Uterus (tissue), 4 donors: ENCODE measurements at regions of chr15 and their contacts with region 1.

Region 1: GRCh38 chr15:67303490-67304363 is 49.1 kb downstream of the IQCH start:
- DNase-seq: peak in 1 of 2 donors; percentile 33
- H3K4me3 ChIP-seq: no peak overlapping the region
- H3K27ac ChIP-seq: no peak overlapping the region
- H3K4me1 ChIP-seq: no peaks in the 10 kb centered on the region
- H3K27me3 ChIP-seq: no peaks in the 10 kb centered on the region
- CTCF ChIP-seq: peak; percentile 31 to 81 (median 72)
- POLR2A ChIP-seq: no peak

Region 2: DNA sequence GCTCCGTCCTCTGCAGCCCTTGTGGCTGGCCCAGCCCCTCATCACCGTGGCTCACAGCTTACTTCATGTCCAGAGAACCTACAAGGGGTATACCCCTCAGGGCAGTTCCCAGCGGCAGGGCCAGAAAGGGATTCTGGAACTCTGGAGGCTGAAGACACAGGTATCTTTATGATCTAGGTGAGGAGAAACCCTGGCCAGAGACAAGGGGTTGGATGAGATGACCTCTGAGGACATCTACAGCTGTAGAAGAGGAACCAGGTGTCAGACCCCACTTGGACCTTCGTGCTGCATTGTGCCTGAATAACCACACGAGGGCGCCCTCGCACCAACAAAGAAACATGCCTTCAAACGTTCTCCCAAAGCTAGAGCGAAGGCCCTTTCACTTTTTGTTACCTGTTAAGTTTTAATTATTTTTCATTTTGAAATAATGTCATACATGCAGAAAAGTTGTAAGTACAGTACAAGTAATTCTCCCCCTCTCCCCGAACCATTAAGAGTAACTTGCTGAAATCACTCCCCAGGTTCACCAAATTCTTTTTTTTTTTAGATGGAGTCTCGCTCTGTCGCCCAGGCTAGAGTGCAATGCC is 357.1 kb before region 1 on chr15:
- intact Hi-C with region 1: loop called (anchors 5 kb)
- DNase-seq: peak; percentile 70 to 74
- H3K4me3 ChIP-seq: no peak overlapping the region
- H3K27ac ChIP-seq: no peak overlapping the region
- H3K4me1 ChIP-seq: no peaks in the 10 kb centered on the region
- H3K27me3 ChIP-seq: no peaks in the 10 kb centered on the region
- CTCF ChIP-seq: peak; percentile 90 to 93 (median 92)
- POLR2A ChIP-seq: no peak

Region 3: DNA sequence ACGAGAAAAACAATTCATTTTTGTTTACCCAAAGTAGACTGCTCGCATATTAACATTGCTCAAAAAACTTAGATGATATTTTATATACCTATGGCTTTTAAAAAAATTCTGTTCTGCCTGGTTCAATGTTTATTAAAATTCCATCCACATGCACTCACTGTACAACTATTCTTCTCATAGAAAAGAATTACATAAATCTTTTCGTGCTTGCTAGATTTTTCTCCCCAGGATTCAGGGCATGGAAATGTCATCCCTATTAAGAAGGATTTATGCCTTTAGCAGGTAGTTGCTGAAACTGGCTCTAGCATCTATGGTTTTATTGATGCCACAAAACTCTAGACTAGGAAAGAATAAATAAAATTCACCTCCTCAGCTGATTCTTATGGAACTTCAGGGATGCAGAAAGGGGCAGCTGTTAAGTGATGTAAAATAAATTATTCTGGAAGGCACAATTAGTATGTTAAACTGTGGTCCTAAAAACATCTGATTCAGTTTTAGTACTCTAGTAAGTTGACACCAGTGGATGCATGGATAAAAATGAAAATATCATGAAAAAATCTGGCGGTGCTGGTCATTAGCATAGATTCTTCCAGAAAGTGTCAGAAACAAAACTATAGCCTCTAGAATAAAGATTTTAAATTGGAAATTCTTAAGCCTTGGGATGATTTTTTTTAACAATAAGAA is 90.9 kb before region 1 on chr15:
- intact Hi-C with region 1: no loop called
- DNase-seq: no peak
- H3K4me3 ChIP-seq: no peak overlapping the region
- H3K27ac ChIP-seq: no peak overlapping the region
- H3K4me1 ChIP-seq: peaks cover 0 to 3% of the 10 kb centered on the region in 2 donors
- H3K27me3 ChIP-seq: no peaks in the 10 kb centered on the region
- CTCF ChIP-seq: no peak
- POLR2A ChIP-seq: no peak